ENCODE measurements at regions of chr15 and their contacts with region 1.

Region 1: GRCh38 chr15:42137431-42138261 is 18.8 kb downstream of the PLA2G4F start:
- DNase-seq: no peak
- ATAC-seq: peak; percentile 69
- H3K4me3 ChIP-seq: no peak overlapping the region
- H3K27ac ChIP-seq: no peak overlapping the region
- H3K4me1 ChIP-seq: no peaks in the 10 kb centered on the region; the same call in 1 of the 2 replicates
- H3K27me3 ChIP-seq: no peaks in the 10 kb centered on the region
- CTCF ChIP-seq: peak; percentile 82

Region 2: DNA sequence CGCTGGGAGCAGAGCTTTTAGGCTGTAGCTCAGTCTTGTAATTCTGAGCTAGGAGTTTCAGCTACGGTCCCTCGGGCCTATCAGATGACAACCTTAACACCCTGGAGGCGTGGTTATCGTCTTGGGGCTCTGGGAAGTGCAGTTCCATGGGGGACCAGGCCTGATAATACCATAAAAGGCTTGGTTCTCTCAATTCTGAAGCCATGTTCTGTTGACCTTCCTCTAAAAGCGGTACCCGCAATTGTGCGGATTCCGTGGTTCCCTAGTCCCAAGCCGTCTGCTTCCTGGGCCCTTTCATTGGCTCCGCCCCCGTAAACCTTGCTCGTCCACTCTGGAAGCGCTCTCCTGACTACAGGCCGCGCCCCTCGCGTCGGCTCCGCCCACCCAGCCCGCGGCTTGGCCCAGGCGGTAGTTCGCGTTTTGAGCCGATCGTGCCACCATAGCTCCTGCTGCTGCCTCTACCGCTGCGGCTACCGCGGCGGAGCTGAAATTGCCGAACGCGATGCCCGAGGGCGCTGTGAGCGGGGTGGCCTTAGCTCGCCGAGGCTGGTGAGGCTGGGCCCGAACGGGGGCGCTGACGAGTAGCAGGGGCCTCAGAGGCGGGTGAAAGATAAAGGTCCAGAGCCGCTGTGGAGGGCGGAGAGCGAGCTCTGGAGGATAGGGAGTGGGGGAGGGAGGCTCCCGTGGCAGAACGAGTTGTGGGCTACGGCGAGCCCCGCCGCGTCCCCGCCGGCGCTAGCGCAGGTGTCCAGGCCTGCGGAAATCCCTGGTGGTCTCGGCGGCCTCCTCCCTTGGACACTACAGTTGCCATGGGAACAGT is 363.4 kb before region 1 on chr15 and contains the start of gene MAPKBP1:
- CTCF ChIA-PET with region 1: interaction called, 15 read pairs
- POLR2A ChIA-PET with region 1: no interaction called
- in situ Hi-C with region 1: no loop called
- intact Hi-C with region 1: no loop called
- DNase-seq: peak; percentile 91
- ATAC-seq: peak; percentile 95
- H3K4me3 ChIP-seq: peak within 1 kb of the TSS; percentile 65 to 99
- H3K27ac ChIP-seq: peak within 1 kb of the TSS; percentile 93
- H3K4me1 ChIP-seq: peaks cover 39% of the 10 kb centered on the region
- H3K27me3 ChIP-seq: no peaks in the 10 kb centered on the region
- CTCF ChIP-seq: peak; percentile 74
- total RNA-seq, gene MAPKBP1: 38.4 TPM

Region 3: GRCh38 chr15:41928637-41929620 is 208.7 kb before region 1 on chr15:
- CTCF ChIA-PET with region 1: no interaction called
- POLR2A ChIA-PET with region 1: no interaction called
- in situ Hi-C with region 1: no loop called
- intact Hi-C with region 1: no loop called
- DNase-seq: no peak
- ATAC-seq: no peak
- H3K4me3 ChIP-seq: no peak overlapping the region
- H3K27ac ChIP-seq: peak overlapping the region; percentile 94
- H3K4me1 ChIP-seq: peaks cover 71% of the 10 kb centered on the region
- H3K27me3 ChIP-seq: no peaks in the 10 kb centered on the region
- CTCF ChIP-seq: no peak

Region 4: GRCh38 chr15:41989259-41989933 is 148.2 kb before region 1 on chr15:
- CTCF ChIA-PET with region 1: interaction called, 3 read pairs
- POLR2A ChIA-PET with region 1: no interaction called
- in situ Hi-C with region 1: no loop called
- intact Hi-C with region 1: loop called (anchors 5 kb)
- DNase-seq: peak; percentile 70
- ATAC-seq: peak; percentile 96
- H3K4me3 ChIP-seq: no peak overlapping the region
- H3K27ac ChIP-seq: no peak overlapping the region
- H3K4me1 ChIP-seq: no peaks in the 10 kb centered on the region; the same call in 1 of the 2 replicates
- H3K27me3 ChIP-seq: no peaks in the 10 kb centered on the region
- CTCF ChIP-seq: peak; percentile 97

Region 5: DNA sequence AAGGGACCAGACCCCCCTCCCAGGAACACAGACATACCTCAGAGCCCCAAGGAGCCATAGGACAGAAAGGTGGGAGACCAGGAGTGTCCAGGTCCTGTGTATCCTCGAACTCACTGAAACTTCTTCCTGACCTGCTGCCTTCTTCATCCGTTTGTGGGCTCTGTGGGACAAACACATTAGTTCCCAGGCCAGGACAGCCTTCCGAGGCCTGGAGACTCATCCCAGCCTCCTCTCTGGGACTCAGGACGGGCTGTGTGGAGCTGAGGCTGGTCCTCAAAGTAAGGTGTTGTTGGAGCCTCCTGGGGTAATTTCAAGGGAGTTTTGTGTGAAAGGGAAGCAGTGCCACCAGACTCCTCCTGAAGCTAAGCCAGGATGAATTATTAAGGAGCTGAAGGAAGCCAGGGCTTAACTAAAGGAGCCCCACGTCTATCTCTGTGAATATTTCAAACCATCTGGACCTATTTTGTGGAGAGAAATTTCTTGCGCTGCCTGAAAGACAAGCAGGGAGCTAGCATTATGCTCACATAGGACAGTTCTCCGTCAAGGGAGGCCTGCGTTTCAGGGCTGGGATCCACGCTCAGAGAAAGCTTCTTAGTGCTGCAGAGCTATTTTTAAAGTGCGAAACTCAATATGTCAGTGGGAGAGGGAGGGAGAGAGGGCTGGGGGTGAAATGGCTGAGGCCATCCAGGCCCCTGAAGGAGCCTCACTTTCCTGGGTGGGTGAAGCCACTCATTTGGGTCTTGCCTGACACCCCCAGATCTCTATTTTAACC is 87.0 kb before region 1 on chr15:
- CTCF ChIA-PET with region 1: no interaction called
- POLR2A ChIA-PET with region 1: no interaction called
- in situ Hi-C with region 1: no loop called
- intact Hi-C with region 1: no loop called
- DNase-seq: no peak
- ATAC-seq: peak; percentile 23; the same call in 1 of the 2 replicates
- H3K4me3 ChIP-seq: no peak overlapping the region
- H3K27ac ChIP-seq: no peak overlapping the region
- H3K4me1 ChIP-seq: no peaks in the 10 kb centered on the region
- H3K27me3 ChIP-seq: 0 out of 2 replicates have a peak, but pooled peaks cover 2% of the 10 kb centered on the region
- CTCF ChIP-seq: no peak

Region 6: GRCh38 chr15:42066764-42067415 is 70.8 kb before region 1 on chr15:
- CTCF ChIA-PET with region 1: no interaction called
- POLR2A ChIA-PET with region 1: no interaction called
- in situ Hi-C with region 1: no loop called
- intact Hi-C with region 1: loop called (anchors 2 kb)
- DNase-seq: no peak
- ATAC-seq: no peak
- H3K4me3 ChIP-seq: no peak overlapping the region
- H3K27ac ChIP-seq: no peak overlapping the region
- H3K4me1 ChIP-seq: no peaks in the 10 kb centered on the region
- H3K27me3 ChIP-seq: no peaks in the 10 kb centered on the region
- CTCF ChIP-seq: no peak; the same call in 1 of the 2 replicates